ENCODE measurements at regions of chr2 and their contacts with region 1.

Region 1: DNA sequence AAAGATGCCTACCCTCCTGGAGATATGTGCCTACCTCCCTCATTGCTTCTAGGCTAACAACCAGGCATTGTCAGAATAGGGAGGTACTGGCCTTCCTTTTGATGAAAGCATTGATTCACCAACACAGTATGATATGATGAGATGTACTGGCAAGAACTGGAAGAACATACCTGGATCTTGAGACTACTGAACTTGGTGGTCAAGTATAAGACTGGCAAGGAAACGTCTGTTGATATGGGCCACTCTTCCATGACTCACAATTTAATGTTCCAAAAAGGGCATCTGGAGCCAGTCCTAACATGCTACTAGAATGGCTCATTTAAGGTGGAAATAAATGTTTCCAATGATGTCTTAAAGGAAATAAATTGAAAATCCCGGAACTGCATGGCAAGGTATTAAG is 18.1 kb downstream of the DTNB start:
- DNase-seq: no peak
- ATAC-seq: 0 out of 2 replicates have a peak, but pooled peaks have one; percentile 21
- H3K4me3 ChIP-seq: no peak overlapping the region
- H3K27ac ChIP-seq: no peak overlapping the region
- H3K4me1 ChIP-seq: no peaks in the 10 kb centered on the region; the same call in 1 of the 2 replicates
- H3K27me3 ChIP-seq: no peaks in the 10 kb centered on the region
- CTCF ChIP-seq: no peak

Region 2: DNA sequence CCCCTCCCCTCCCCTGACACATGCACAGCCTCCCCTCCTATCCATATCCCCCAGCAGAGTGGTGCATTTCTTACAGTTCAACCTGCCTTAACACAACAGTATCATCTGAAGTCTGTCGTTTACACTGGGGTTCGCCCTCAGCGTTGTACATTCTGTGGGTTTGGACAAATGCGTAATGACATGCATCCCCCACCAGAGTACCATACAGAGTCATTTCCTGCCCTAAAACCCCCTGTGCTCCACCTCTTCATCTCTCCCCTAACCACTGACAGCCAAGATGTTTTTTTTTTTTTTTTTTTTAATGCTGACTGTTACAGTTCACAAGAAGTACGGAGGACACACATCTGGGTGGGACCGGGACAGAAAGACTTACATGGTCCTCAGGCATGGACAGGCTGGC is 509.5 kb before region 1 on chr2:
- CTCF ChIA-PET with region 1: no interaction called
- POLR2A ChIA-PET with region 1: no interaction called
- in situ Hi-C with region 1: no loop called
- intact Hi-C with region 1: no loop called
- DNase-seq: no peak
- ATAC-seq: no peak
- H3K4me3 ChIP-seq: no peak overlapping the region
- H3K27ac ChIP-seq: no peak overlapping the region
- H3K4me1 ChIP-seq: no peaks in the 10 kb centered on the region
- H3K27me3 ChIP-seq: no peaks in the 10 kb centered on the region
- CTCF ChIP-seq: no peak

Region 3: DNA sequence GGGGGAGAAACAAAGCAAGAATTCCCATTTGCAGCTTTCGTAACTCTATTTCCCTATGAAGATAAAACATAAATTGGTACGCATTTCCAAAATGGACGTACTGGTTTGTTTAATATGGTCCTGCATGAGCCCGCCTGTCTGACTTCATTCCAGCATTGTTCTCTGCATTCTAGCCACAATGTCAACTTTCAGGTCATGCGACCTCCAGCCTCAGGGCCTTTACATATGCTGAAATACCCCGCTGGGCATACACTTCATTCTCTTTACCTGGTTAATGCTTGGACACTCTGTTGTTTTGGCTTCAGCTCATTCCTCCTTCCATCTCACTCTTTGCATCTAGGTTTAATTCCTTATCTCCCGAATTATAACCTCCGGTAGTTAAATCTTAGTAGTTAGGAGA is 209.9 kb before region 1 on chr2:
- CTCF ChIA-PET with region 1: interaction called, 14 read pairs
- POLR2A ChIA-PET with region 1: no interaction called
- in situ Hi-C with region 1: no loop called
- intact Hi-C with region 1: no loop called
- DNase-seq: no peak
- ATAC-seq: no peak
- H3K4me3 ChIP-seq: no peak overlapping the region
- H3K27ac ChIP-seq: no peak overlapping the region
- H3K4me1 ChIP-seq: no peaks in the 10 kb centered on the region
- H3K27me3 ChIP-seq: no peaks in the 10 kb centered on the region
- CTCF ChIP-seq: no peak

Region 4: GRCh38 chr2:25483601-25484266 is 171.6 kb before region 1 on chr2:
- CTCF ChIA-PET with region 1: no interaction called
- POLR2A ChIA-PET with region 1: no interaction called
- in situ Hi-C with region 1: no loop called
- intact Hi-C with region 1: no loop called
- DNase-seq: no peak
- ATAC-seq: no peak
- H3K4me3 ChIP-seq: no peak overlapping the region
- H3K27ac ChIP-seq: no peak overlapping the region
- H3K4me1 ChIP-seq: no peaks in the 10 kb centered on the region
- H3K27me3 ChIP-seq: no peaks in the 10 kb centered on the region
- CTCF ChIP-seq: no peak

Region 5: GRCh38 chr2:26139269-26140183 is 484.2 kb after region 1 on chr2:
- CTCF ChIA-PET with region 1: no interaction called
- POLR2A ChIA-PET with region 1: no interaction called
- in situ Hi-C with region 1: no loop called
- intact Hi-C with region 1: no loop called
- DNase-seq: no peak
- ATAC-seq: peak; percentile 65
- H3K4me3 ChIP-seq: no peak overlapping the region
- H3K27ac ChIP-seq: no peak overlapping the region
- H3K4me1 ChIP-seq: peaks cover 12% of the 10 kb centered on the region
- H3K27me3 ChIP-seq: no peaks in the 10 kb centered on the region
- CTCF ChIP-seq: no peak